BJ (cell line): ENCODE measurements at regions of chr11 and their contacts with region 1.

Region 1: GRCh38 chr11:6812390-6813005 is 13.0 kb upstream of the OR6A2 start:
- DNase-seq: no peak
- H3K4me3 ChIP-seq: no peak overlapping the region
- H3K27me3 ChIP-seq: no peaks in the 10 kb centered on the region
- CTCF ChIP-seq: peak; percentile 96

Region 2: DNA sequence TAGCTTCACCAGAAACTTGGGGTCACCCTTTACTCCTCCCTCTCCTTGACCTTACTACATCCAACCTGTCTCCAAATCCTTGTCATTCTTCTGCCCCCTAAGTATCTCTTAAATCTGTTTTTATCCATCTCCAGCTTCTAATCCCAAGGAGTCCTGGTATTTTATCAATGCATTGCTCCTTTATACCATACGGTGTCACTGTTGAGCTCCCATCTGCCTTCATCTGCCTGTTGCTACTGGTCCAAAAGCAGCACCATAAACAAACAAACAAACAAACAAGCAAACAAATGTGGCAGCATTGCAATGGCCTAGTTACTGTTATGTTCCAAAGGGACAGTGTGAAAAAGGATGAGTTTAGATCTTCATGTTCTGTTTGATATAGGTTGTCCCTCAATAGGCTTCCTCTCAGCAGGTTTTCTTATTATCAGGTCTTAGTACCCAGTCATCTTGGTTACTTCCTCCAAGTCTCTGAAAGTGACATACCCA is 281.2 kb before region 1 on chr11:
- CTCF ChIA-PET with region 1: no interaction called
- POLR2A ChIA-PET with region 1: no interaction called
- DNase-seq: no peak
- H3K4me3 ChIP-seq: no peak overlapping the region
- H3K27me3 ChIP-seq: no peaks in the 10 kb centered on the region
- CTCF ChIP-seq: peak; percentile 82

Region 3: GRCh38 chr11:6799402-6799801 is 13.1 kb before region 1 on chr11 and contains the start of gene OR6A2:
- CTCF ChIA-PET with region 1: interaction called, 20 read pairs
- POLR2A ChIA-PET with region 1: no interaction called
- DNase-seq: no peak
- H3K4me3 ChIP-seq: no peak within 1 kb of the TSS
- H3K27me3 ChIP-seq: no peaks in the 10 kb centered on the region
- CTCF ChIP-seq: no peak
- polyA plus RNA-seq, gene OR6A2: 0.04 TPM in 1 of 2 replicates, not detected in the other

Region 4: GRCh38 chr11:6825231-6825744 is 12.8 kb after region 1 on chr11:
- CTCF ChIA-PET with region 1: interaction called, 17 read pairs
- POLR2A ChIA-PET with region 1: no interaction called
- DNase-seq: no peak
- H3K4me3 ChIP-seq: no peak overlapping the region
- H3K27me3 ChIP-seq: no peaks in the 10 kb centered on the region
- CTCF ChIP-seq: no peak

Region 5: GRCh38 chr11:7020183-7020917 is 207.9 kb after region 1 on chr11 and contains the starts of genes NLRP14 and ZNF214:
- CTCF ChIA-PET with region 1: interaction called, 10 read pairs
- POLR2A ChIA-PET with region 1: no interaction called
- DNase-seq: peak; percentile 70
- H3K4me3 ChIP-seq: peak within 1 kb of the TSS; percentile 56
- H3K27me3 ChIP-seq: no peaks in the 10 kb centered on the region
- CTCF ChIP-seq: no peak
- polyA plus RNA-seq, gene NLRP14: 0.01 and 0.04 TPM in 2 replicates
- polyA plus RNA-seq, gene ZNF214: 0.75 and 1.8 TPM in 2 replicates